ENCODE measurements at regions of chr2 and their contacts with region 1.

Region 1: DNA sequence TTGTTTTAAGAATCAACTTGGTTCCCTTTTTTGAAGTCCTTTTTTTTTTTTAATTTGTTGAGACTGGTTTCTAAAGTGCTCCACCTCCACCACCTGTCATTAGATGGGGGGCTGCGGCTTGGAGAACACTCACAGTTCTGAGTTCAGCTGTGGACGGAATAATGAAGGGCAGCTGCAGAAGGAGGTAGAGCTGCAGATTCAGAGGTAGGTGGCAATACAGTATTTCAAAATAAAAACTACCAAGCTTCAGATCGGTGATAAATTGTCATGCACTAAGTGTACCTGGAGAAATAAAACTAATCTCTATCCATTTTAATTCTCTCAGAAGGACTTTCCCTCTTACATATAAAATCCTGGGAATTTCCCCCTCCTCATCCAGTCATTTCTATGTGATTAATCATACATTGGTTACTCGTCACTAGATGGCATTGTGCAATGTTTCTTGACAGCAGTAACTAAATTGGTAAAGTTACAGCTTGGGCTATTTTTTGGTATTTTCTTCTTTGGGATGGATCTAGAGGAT is 81.1 kb upstream of the SLC39A10 start:
- DNase-seq: no peak
- ATAC-seq: peak; percentile 79
- H3K4me3 Mint-ChIP-seq: peak overlapping the region; percentile 70
- H3K27ac Mint-ChIP-seq: peak overlapping the region; percentile 76
- H3K4me1 Mint-ChIP-seq: peaks cover 50% of the 10 kb centered on the region
- H3K27me3 Mint-ChIP-seq: no peaks in the 10 kb centered on the region
- CTCF ChIP-seq: no peak

Region 2: GRCh38 chr2:195498176-195498575 is 77.8 kb before region 1 on chr2:
- CTCF ChIA-PET with region 1: interaction called, 54 read pairs
- POLR2A ChIA-PET with region 1: interaction called, 3 read pairs
- intact Hi-C with region 1: loop called (anchors 1 kb)
- DNase-seq: peak; percentile 22
- ATAC-seq: peak; percentile 66
- H3K4me3 Mint-ChIP-seq: no peak overlapping the region
- H3K27ac Mint-ChIP-seq: no peak overlapping the region
- H3K4me1 Mint-ChIP-seq: peaks cover 18% of the 10 kb centered on the region
- H3K27me3 Mint-ChIP-seq: no peaks in the 10 kb centered on the region
- CTCF ChIP-seq: no peak

Region 3: GRCh38 chr2:195586062-195586714 is 10.2 kb after region 1 on chr2:
- CTCF ChIA-PET with region 1: interaction called, 12 read pairs
- POLR2A ChIA-PET with region 1: interaction called, 5 read pairs
- intact Hi-C with region 1: no loop called
- DNase-seq: no peak
- ATAC-seq: no peak
- H3K4me3 Mint-ChIP-seq: no peak overlapping the region
- H3K27ac Mint-ChIP-seq: no peak overlapping the region
- H3K4me1 Mint-ChIP-seq: peaks cover 1% of the 10 kb centered on the region
- H3K27me3 Mint-ChIP-seq: no peaks in the 10 kb centered on the region
- CTCF ChIP-seq: no peak

Region 4: DNA sequence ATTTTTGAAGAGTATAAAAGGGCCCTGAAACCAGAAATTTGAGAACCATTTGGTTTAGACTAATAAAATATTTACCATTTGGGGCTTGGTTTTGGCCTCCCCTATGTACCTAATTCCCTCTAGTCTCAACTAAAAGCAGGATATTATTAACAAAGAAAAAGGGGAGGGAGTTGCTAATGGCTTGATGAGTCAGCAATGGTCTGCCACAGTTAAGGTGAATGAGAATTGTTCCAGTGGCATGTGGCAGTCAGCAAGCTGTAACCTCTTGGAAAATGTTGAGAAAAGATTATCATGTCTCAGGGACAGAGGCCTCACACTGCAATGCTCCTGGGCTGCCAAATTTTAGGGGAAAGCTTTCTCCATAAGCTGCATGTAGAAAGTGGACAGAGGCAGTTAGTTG is 61.0 kb after region 1 on chr2:
- CTCF ChIA-PET with region 1: interaction called, 10 read pairs
- POLR2A ChIA-PET with region 1: interaction called, 4 read pairs
- intact Hi-C with region 1: no loop called
- DNase-seq: no peak
- ATAC-seq: no peak
- H3K4me3 Mint-ChIP-seq: no peak overlapping the region
- H3K27ac Mint-ChIP-seq: no peak overlapping the region
- H3K4me1 Mint-ChIP-seq: peaks cover 18% of the 10 kb centered on the region
- H3K27me3 Mint-ChIP-seq: no peaks in the 10 kb centered on the region
- CTCF ChIP-seq: no peak

Region 5: DNA sequence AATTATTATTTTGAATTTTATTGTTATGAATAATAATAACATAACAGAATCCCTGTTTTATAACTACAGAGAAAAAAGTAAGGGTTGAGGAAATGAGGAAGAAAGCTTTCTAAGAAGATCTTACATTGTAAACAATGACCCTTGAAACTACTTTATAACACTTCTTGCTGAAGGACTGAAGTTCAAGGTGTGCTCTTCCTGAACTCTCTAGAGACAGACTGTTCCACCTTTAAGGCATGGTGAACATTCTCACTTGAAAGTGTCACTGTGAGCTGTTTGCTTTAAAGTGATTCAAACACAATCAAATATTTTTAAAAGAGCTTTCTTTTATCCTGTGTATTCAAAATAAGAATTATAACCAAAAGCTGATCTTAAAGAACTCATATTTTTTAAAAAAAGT is 361.2 kb after region 1 on chr2:
- CTCF ChIA-PET with region 1: no interaction called
- POLR2A ChIA-PET with region 1: no interaction called
- intact Hi-C with region 1: loop called (anchors 1 kb)
- DNase-seq: no peak
- ATAC-seq: no peak
- H3K4me3 Mint-ChIP-seq: no peak overlapping the region
- H3K27ac Mint-ChIP-seq: no peak overlapping the region
- H3K4me1 Mint-ChIP-seq: no peaks in the 10 kb centered on the region
- H3K27me3 Mint-ChIP-seq: no peaks in the 10 kb centered on the region
- CTCF ChIP-seq: no peak

Measured in activated B cell treated with CpG ODN at 0.5 μM for 24 hours (primary cell).